Activated B cell treated with CpG ODN at 0.5 μM for 24 hours (primary cell): ENCODE measurements at regions of chr6 and their contacts with region 1.

Region 1: GRCh38 chr6:30006170-30007131 is 54.6 kb upstream of the POLR1H start:
- DNase-seq: no peak
- ATAC-seq: peak; percentile 45
- H3K4me3 Mint-ChIP-seq: peak overlapping the region; percentile 84
- H3K27ac Mint-ChIP-seq: no peak overlapping the region
- H3K4me1 Mint-ChIP-seq: peaks cover 19% of the 10 kb centered on the region
- H3K27me3 Mint-ChIP-seq: peaks cover 20% of the 10 kb centered on the region
- CTCF ChIP-seq: no peak

Region 2: DNA sequence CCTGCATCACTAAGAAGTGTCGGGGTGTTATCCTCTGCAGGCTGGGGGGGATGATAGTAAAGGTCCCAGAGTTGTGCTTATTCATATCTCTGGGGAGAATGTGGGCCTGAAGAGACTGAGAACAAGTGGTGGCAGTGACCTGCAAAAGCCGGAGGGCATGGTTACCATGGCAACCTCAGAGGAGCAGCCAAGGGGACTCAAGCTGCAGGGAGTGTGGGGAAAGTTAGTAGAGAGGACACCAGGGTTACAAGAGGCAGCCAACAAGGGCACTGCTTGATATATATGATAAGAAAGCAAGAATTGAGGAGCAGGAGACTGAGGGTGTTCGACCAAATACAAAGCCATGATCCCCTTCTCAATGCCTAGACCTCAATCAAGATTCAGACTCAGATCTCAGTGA is 237.1 kb before region 1 on chr6:
- CTCF ChIA-PET with region 1: no interaction called
- POLR2A ChIA-PET with region 1: no interaction called
- intact Hi-C with region 1: no loop called
- DNase-seq: no peak
- ATAC-seq: no peak
- H3K4me3 Mint-ChIP-seq: no peak overlapping the region
- H3K27ac Mint-ChIP-seq: no peak overlapping the region
- H3K4me1 Mint-ChIP-seq: no peaks in the 10 kb centered on the region
- H3K27me3 Mint-ChIP-seq: peaks cover 22% of the 10 kb centered on the region
- CTCF ChIP-seq: no peak

Region 3: DNA sequence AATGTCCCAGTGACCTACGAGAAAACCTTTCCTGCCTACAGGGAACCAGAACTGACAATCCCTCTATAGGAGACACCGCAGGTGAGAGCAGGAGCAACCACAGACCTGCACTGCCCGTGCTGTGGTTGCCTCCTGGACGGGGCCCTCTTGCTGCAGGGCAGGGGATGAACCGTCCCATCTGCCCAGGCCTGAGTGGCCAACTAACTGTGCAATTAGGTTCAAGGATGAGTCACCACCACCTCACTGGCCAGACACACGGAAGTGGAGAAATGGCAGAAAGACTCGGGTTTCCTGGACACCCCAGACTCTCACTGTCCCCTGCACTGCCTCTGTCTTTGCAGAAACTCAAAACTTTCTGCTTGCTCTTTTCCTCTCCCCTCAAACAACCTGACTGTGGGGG is 192.6 kb before region 1 on chr6:
- CTCF ChIA-PET with region 1: no interaction called
- POLR2A ChIA-PET with region 1: no interaction called
- intact Hi-C with region 1: no loop called
- DNase-seq: no peak
- ATAC-seq: no peak
- H3K4me3 Mint-ChIP-seq: no peak overlapping the region
- H3K27ac Mint-ChIP-seq: no peak overlapping the region
- H3K4me1 Mint-ChIP-seq: no peaks in the 10 kb centered on the region
- H3K27me3 Mint-ChIP-seq: peaks cover 20% of the 10 kb centered on the region
- CTCF ChIP-seq: no peak

Region 4: GRCh38 chr6:29926413-29927274 is 79.8 kb before region 1 on chr6:
- CTCF ChIA-PET with region 1: no interaction called
- POLR2A ChIA-PET with region 1: no interaction called
- intact Hi-C with region 1: loop called (anchors 5 kb)
- DNase-seq: peak; percentile 50
- ATAC-seq: peak; percentile 77
- H3K4me3 Mint-ChIP-seq: peak overlapping the region; percentile 90
- H3K27ac Mint-ChIP-seq: peak overlapping the region; percentile 94
- H3K4me1 Mint-ChIP-seq: peaks cover 16% of the 10 kb centered on the region
- H3K27me3 Mint-ChIP-seq: no peaks in the 10 kb centered on the region
- CTCF ChIP-seq: no peak

Region 5: GRCh38 chr6:29976588-29977424 is 29.6 kb before region 1 on chr6:
- CTCF ChIA-PET with region 1: no interaction called
- POLR2A ChIA-PET with region 1: no interaction called
- intact Hi-C with region 1: loop called (anchors 2 kb)
- DNase-seq: peak; percentile 45
- ATAC-seq: peak; percentile 87
- H3K4me3 Mint-ChIP-seq: peak overlapping the region; percentile 91
- H3K27ac Mint-ChIP-seq: peak overlapping the region; percentile 26
- H3K4me1 Mint-ChIP-seq: peaks cover 33% of the 10 kb centered on the region
- H3K27me3 Mint-ChIP-seq: peaks cover 47% of the 10 kb centered on the region
- CTCF ChIP-seq: no peak

Region 6: DNA sequence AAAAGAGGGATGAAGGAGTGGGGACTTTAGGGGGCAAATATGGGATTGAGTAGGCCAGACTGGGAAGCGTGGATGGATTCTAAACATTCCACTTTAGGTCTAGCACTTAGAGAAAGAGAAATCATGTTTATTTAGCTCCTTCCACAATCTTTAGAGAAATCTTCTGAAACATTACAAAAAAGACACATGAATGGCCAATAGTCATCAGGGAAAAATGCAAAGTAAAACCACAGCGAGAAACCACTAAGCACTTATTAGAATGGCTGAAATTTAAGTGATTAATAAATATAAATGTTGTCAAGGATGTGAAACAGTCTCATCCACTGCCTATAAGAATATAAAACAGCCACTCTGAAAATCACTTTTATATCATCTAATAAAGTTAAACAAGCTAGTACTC is 17.2 kb before region 1 on chr6:
- CTCF ChIA-PET with region 1: no interaction called
- POLR2A ChIA-PET with region 1: no interaction called
- intact Hi-C with region 1: loop called (anchors 2 kb)
- DNase-seq: no peak
- ATAC-seq: no peak
- H3K4me3 Mint-ChIP-seq: no peak overlapping the region
- H3K27ac Mint-ChIP-seq: no peak overlapping the region
- H3K4me1 Mint-ChIP-seq: peaks cover 4% of the 10 kb centered on the region
- H3K27me3 Mint-ChIP-seq: no peaks in the 10 kb centered on the region
- CTCF ChIP-seq: no peak